ENCODE measurements at regions of chr3 and their contacts with region 1.

Region 1: DNA sequence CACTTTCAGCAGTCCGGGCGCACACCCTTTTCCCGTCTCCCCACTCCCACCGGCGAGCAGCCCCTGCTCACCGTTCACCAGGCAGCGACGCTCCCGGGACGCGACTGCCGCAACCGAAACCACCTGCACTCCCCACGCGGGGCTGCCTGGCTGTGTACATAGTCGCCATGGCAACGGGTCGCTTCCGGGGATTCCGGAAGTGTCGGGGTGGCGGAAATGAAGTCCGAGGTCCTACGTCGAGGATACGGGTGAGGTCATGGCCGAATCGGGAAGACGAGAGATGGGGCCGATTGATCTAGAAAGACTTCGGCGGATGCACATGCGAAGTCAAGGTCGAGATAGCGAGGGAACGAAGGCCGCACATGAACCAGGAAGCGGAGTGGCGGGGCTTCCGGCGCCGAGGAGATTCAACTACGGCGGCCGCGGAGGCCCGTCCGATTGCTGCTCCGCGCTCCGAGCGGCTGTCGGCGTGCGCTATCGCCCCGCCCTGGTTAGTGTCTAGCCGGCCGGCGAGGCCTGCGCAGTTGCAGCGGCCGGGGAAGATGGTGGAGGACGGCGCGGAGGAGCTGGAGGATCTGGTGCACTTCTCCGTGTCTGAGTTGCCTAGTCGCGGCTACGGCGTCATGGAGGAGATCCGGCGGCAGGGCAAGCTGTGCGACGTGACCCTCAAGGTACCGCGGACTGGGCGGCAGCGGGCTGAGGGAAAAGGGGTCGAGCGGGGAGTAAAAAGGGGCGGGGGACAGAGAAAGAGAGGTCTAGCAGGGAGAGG is at the starts of genes KIF9 and KLHL18:
- DNase-seq: peak; percentile 96
- total RNA-seq, gene KIF9: 11.7 TPM
- total RNA-seq, gene KLHL18: 47.6 TPM

Region 2: DNA sequence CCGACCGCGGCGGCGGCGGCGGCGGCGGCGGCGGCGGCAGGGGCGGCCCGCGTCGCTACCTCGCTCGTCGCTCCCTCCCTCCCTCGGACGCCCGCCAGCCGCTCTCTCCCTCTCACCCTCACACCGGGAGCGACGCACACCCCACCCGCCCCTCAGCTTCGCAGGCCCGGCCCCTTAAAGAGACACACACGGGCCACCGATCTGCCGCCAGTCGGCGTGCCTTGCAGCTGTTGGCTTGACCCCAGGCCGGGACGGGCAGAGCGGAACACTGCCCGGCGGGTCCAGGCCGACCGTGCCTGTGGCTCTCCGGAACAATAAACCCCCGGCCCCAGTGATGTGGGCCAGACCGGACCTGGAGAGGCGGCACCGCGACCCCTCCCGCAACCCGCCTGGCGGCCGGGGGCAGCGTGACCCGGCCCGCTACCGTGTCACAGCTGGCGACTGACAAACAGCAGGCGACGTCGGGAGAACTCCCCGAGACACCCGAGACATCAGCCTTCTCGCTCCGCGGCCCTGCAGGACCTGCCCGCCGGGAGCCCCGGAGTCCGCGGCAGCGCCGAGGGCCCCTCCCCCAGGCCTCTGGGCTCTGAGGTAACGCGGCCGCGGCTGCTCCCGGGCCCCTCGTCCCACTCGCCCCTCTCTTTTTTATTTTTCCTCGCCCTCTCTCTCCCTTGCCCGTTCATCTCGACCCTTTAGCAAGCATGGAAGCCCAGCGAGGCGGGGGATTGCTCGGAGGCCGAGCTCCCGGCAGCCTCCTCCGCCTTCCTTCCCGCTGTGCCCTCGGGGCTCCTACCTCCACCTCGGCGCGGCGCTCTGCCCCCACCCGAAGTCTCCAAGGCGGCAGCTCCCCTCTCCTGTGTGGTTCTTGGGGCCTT is 118.4 kb before region 1 on chr3 and contains the start of gene SETD2:
- intact Hi-C with region 1: loop called (anchors 2 kb)
- DNase-seq: peak; percentile 96
- total RNA-seq, gene SETD2: 35.6 TPM

Region 3: GRCh38 chr3:47266709-47267489 is 15.7 kb before region 1 on chr3:
- intact Hi-C with region 1: loop called (anchors 2 kb)
- DNase-seq: peak; percentile 94

Region 4: DNA sequence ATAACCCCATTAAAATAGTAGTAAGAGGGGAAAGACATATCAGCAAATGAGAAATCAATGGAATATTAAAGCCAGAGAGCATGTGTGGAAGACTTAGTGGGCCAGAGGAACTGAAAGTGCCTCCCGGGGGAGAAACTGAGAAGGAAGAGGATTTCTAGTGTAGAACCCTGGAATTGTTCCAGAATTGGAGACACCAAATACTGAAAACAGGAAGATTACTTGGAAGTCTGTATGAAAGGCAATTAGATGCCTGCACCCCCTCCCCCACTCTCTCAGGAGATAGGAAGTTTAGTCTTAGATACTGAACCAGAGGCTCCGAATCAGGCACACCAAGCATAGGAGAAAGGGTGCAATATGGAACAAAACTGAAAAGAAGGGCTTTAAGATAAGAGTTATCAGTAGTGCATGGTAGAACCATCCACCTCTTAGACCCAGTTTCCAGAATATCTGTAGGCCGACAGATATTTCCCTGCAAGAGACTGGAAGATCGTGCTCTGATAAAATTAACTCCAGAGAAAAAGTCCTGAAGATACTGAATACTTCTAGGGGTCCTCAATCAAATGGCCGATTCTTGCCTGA is 32.5 kb after region 1 on chr3:
- intact Hi-C with region 1: loop called (anchors 2 kb)
- DNase-seq: no peak

Region 5: GRCh38 chr3:47324278-47324865 is 41.8 kb after region 1 on chr3:
- intact Hi-C with region 1: loop called (anchors 2 kb)
- DNase-seq: no peak

Region 6: GRCh38 chr3:47380601-47381316 is 98.2 kb after region 1 on chr3 and contains the start of gene PTPN23:
- intact Hi-C with region 1: loop called (anchors 5 kb)
- DNase-seq: peak; percentile 100
- total RNA-seq, gene PTPN23: 24.0 TPM

Region 7: DNA sequence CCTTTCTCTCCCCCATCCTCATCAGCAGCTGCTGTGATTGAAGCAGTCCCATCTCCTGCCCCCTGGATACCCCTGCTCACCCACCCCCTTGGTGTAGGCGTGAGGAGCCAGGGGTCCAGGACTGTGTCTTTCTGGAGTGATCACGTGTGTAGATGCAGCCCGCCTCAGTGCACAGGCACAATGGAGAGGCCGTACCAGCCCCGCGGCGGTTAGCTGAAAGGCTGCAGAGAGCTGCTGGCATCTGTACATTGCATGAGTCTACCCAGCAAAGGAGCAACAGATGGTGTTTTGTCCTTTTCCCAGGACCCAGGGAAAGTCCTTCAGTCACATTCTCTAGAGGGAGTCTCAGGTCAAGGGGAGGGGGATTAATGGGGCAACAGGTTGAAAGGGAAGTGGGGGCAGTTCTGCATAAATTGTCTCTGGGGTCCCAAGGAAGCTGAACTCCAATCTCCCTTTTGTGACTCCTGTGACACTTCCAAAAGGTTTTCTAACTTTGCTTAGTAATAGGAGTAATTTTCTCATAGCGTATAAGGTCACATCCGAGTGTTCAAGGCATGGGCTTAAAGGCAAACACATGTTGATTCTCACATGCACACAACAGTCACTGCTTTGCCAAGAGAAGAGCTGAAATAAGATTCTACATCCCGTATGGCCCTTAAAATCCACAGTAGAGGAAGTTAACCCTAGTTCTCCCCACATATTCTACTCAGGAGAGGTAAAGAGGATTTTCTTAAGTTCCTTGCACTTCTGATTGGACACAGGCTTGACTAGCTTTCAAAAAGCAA is 289.0 kb after region 1 on chr3:
- intact Hi-C with region 1: no loop called
- DNase-seq: no peak